ENCODE measurements at regions of chr16 and their contacts with region 1.

Region 1: DNA sequence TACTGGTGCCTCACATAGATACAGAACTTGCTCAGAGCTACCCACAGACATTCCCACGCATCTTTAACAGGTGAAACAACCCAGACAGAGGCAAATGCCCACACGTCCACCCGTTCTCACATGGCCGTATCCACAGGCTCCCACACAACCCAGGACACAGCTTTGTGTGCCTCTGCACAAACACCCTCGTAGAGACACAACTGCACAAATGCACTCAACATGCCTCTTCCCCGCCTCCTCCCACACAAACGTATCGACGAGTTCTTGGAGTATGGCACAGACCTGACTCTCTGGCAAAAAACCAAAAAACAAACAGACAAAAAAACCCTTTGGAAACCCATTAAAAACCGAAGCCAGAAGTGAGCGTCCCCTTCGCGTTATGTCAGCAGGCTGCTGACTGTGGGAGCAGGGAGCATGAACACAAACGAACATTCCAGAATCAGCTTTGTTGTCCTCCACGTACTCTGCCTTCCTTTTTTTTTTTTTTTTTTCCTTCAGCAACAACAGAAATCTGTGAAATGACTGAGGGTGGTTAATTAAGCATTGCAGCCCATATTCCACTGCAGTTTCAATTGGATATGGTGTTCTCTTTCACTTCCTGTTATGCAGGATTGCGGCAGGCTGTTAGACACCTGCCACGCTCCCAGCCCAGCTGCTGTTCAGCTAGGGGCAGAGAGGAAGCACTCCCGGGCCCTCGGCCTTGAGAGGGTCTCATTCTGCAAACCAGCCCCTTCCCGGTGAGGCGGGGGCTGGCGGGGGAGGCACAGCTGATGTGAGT is 313.7 kb downstream of the MAF start:
- DNase-seq: peak in 4 of 5 donors; percentile 36 to 48 (median 40)
- H3K4me3 ChIP-seq: peak overlapping the region; percentile 6 to 59
- H3K4me3 Mint-ChIP-seq: peak overlapping the region; percentile 73 to 93 (median 86)
- H3K27ac ChIP-seq: peak overlapping the region; percentile 23
- H3K27ac Mint-ChIP-seq: peak overlapping the region; percentile 79 to 92 (median 88)
- H3K4me1 ChIP-seq: peaks cover 62% of the 10 kb centered on the region
- H3K4me1 Mint-ChIP-seq: peaks cover 44 to 68% (median 59%) of the 10 kb centered on the region in 4 donors
- H3K27me3 ChIP-seq: no peaks in the 10 kb centered on the region
- H3K27me3 Mint-ChIP-seq: no peaks in the 10 kb centered on the region

Region 2: DNA sequence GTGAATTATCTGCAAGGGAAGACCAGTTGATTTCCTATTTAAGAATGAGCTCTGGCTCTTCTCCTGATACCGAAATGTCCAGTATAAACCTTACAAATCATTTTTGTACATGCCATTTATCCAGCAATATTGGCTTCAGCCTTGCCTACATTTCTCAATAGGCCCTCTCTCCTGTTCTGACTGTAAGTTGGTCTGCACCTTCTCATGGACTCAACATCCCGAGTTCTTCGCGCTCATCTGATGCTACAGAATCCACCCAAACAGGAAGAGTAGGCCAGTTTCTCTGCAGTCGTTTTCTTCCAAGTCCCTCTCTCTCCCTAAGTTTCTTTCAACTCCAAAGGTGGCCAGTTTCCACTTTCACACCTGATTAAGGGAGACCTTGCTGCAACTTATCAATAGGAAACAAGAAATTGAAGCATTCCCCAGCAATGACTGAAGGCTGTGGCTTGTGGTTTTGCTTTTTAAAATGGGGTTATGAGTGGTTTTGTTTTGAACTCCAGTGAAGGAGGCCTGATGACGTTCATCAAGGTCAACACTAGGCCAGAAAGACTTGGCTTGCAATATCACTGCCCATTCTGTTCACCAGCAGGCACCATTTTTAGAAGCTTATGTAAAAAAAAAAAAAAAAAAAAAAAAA is 69.3 kb before region 1 on chr16:
- CTCF ChIA-PET with region 1: no interaction called
- POLR2A ChIA-PET with region 1: no interaction called
- intact Hi-C with region 1: no loop called
- DNase-seq: peak; percentile 38 to 65 (median 61)
- H3K4me3 ChIP-seq: no peak overlapping the region
- H3K4me3 Mint-ChIP-seq: peak overlapping the region in 7 of 8 donors; percentile 5 to 65 (median 18)
- H3K27ac ChIP-seq: no peak overlapping the region
- H3K27ac Mint-ChIP-seq: peak overlapping the region in 5 of 7 donors; percentile 10 to 75 (median 61)
- H3K4me1 ChIP-seq: peaks cover 17% of the 10 kb centered on the region
- H3K4me1 Mint-ChIP-seq: peaks cover 16 to 22% (median 20%) of the 10 kb centered on the region in 4 donors
- H3K27me3 ChIP-seq: no peaks in the 10 kb centered on the region
- H3K27me3 Mint-ChIP-seq: no peaks in the 10 kb centered on the region

Region 3: DNA sequence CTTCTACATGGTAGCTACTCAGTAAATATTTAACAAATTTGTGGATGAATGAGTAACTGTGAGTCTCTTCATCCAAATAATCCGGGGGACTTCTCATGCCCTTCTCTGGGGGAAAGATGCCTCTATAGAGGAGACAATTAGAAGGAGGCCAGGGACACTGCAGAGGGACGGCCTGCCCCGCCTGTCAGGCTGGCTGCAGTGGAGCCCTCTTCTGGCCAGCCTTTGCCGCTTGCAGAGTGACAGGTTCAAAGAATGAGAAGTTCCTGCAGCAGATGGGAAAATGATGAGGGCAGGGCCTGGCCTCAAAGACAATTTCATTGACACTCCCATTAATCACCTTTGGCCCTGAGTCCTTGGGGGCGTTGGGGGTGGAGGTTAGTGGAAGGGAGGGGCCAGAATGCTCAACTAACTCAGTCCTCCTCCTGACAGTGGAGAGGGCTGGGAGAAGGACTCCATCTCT is 25.3 kb before region 1 on chr16:
- CTCF ChIA-PET with region 1: interaction called, 19 read pairs
- POLR2A ChIA-PET with region 1: interaction called, 146 read pairs
- intact Hi-C with region 1: no loop called
- DNase-seq: peak in 4 of 5 donors; percentile 43 to 51 (median 47)
- H3K4me3 ChIP-seq: no peak overlapping the region
- H3K4me3 Mint-ChIP-seq: no peak overlapping the region
- H3K27ac ChIP-seq: no peak overlapping the region
- H3K27ac Mint-ChIP-seq: peak overlapping the region in 3 of 7 donors; percentile 4 to 77 (median 23)
- H3K4me1 ChIP-seq: peaks cover 7% of the 10 kb centered on the region
- H3K4me1 Mint-ChIP-seq: peaks cover 8 to 43% (median 17%) of the 10 kb centered on the region in 4 donors
- H3K27me3 ChIP-seq: no peaks in the 10 kb centered on the region
- H3K27me3 Mint-ChIP-seq: no peaks in the 10 kb centered on the region

Region 4: GRCh38 chr16:79316004-79316458 is 29.2 kb after region 1 on chr16:
- CTCF ChIA-PET with region 1: no interaction called
- POLR2A ChIA-PET with region 1: interaction called, 10 read pairs
- intact Hi-C with region 1: no loop called
- DNase-seq: no peak
- H3K4me3 ChIP-seq: no peak overlapping the region
- H3K4me3 Mint-ChIP-seq: peak overlapping the region in 5 of 8 donors; percentile 40 to 67 (median 49)
- H3K27ac ChIP-seq: no peak overlapping the region
- H3K27ac Mint-ChIP-seq: peak overlapping the region in 2 of 7 donors; percentile 3 to 5
- H3K4me1 ChIP-seq: peaks cover 13% of the 10 kb centered on the region
- H3K4me1 Mint-ChIP-seq: peaks cover 10 to 18% (median 16%) of the 10 kb centered on the region in 4 donors
- H3K27me3 ChIP-seq: no peaks in the 10 kb centered on the region
- H3K27me3 Mint-ChIP-seq: peaks cover 2 to 3% of the 10 kb centered on the region in 2 donors

Measured in CD4-positive, alpha-beta memory T cell (primary cell).